ENCODE measurements at regions of chr5 and their contacts with region 1.

Region 1: GRCh38 chr5:151825445-151825844 is 53.7 kb downstream of the G3BP1 start:
- DNase-seq: peak in 1 of 2 donors; percentile 59
- H3K4me3 ChIP-seq: no peak overlapping the region
- CTCF ChIP-seq: peak in 1 of 3 donors; percentile 45
- POLR2A ChIP-seq: no peak

Region 2: GRCh38 chr5:151663617-151664293 is 161.7 kb before region 1 on chr5:
- intact Hi-C with region 1: no loop called
- DNase-seq: peak in 1 of 2 donors; percentile 64
- H3K4me3 ChIP-seq: no peak overlapping the region
- CTCF ChIP-seq: no peak
- POLR2A ChIP-seq: no peak

Region 3: DNA sequence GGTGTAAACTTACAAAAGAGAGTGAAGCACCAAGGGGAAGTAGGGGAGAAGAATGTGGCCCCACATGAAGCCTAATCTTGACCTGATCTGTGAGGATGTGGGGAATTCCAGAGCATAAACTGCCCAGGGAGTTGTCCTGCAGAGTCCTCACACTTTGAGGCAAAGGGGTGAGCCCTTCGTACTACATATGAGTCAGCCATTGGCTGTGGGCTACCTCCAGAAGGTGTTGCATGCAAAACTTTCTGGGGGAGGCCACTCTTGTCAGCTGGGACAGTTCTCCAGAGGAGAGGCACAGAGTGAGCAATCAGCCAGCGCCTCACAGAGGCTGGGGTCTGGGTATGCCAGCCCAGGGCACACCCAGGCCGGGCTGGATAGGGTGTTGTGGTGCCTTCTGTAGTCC is 677.8 kb after region 1 on chr5:
- intact Hi-C with region 1: loop called (anchors 5 kb)
- DNase-seq: no peak
- H3K4me3 ChIP-seq: no peak overlapping the region
- CTCF ChIP-seq: no peak
- POLR2A ChIP-seq: no peak

Region 4: DNA sequence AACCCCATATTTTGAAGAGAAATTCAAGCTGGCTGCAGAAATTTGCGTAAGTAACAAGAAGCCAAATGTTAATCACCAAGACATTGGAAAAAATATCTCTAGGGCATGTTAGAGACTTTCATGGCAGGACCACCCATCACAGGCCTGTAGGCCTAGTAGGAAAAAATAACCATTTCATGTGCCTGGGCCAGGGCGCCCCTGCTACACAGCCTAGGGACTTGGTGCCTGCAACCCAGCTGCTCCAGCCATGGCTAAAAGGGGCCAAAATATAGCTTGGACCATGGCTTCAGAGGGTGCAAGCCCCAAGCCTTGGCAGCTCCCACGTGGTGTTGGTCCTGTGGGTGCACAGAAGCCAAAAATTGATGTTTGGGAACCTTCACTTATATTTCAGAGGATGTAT is 747.4 kb after region 1 on chr5:
- intact Hi-C with region 1: no loop called
- DNase-seq: no peak
- H3K4me3 ChIP-seq: no peak overlapping the region
- CTCF ChIP-seq: no peak
- POLR2A ChIP-seq: no peak